ENCODE measurements at regions of chr15 and their contacts with region 1.

Region 1: DNA sequence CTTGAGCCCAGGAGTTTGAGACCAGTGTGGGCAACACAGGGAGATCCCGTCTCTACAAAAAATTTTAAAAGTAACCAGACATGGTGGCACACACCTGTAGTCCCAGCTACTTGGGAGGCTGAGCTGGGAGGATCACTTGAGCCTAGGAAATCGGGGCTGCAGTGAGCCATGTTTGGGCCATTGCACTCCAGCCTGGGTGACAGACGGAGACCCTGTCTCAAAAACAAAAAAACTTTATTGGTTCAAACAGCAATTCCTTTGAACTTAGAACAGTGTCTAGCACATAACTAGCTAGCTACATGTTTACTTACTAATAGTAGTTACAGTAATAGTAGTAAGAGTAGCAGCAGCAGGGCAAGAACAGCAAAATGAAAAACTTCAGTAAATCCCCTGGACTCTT is 10.1 kb downstream of the HAUS2 start:
- DNase-seq: no peak
- ATAC-seq: peak in 1 of 8 donors; percentile 41
- H3K4me3 ChIP-seq: no peak overlapping the region
- H3K27ac ChIP-seq: no peak overlapping the region
- H3K4me1 ChIP-seq: no peaks in the 10 kb centered on the region
- H3K27me3 ChIP-seq: no peaks in the 10 kb centered on the region
- CTCF ChIP-seq: no peak

Region 2: GRCh38 chr15:42404461-42405235 is 154.1 kb before region 1 on chr15:
- intact Hi-C with region 1: loop called in 1 of 10 experiments (anchors 5 kb)
- DNase-seq: no peak
- ATAC-seq: peak in 3 of 8 donors; percentile 28 to 51 (median 36)
- H3K4me3 ChIP-seq: no peak overlapping the region
- H3K27ac ChIP-seq: no peak overlapping the region
- H3K4me1 ChIP-seq: peaks cover 0 to 6% (median 0%) of the 10 kb centered on the region in 9 donors
- H3K27me3 ChIP-seq: no peaks in the 10 kb centered on the region
- CTCF ChIP-seq: no peak